Breast epithelium (tissue), 4 donors: ENCODE measurements at regions of chr9 and their contacts with region 1.

Region 1: GRCh38 chr9:89388084-89388867 is 70.0 kb downstream of the SECISBP2 start:
- DNase-seq: peak in 1 of 2 donors; percentile 62
- H3K4me3 ChIP-seq: no peak overlapping the region
- H3K27ac ChIP-seq: peak overlapping the region; percentile 65 to 84
- H3K4me1 ChIP-seq: peaks cover 0 to 4% of the 10 kb centered on the region in 2 donors
- H3K27me3 ChIP-seq: no peaks in the 10 kb centered on the region
- CTCF ChIP-seq: no peak
- POLR2A ChIP-seq: no peak

Region 2: GRCh38 chr9:89310475-89311346 is 77.6 kb before region 1 on chr9 and contains the start of gene CKS2:
- intact Hi-C with region 1: no loop called
- DNase-seq: peak; percentile 100
- H3K4me3 ChIP-seq: peak within 1 kb of the TSS; percentile 74 to 87 (median 85)
- H3K27ac ChIP-seq: peak within 1 kb of the TSS; percentile 99 to 100
- H3K4me1 ChIP-seq: peaks cover 0 to 8% of the 10 kb centered on the region in 2 donors
- H3K27me3 ChIP-seq: no peaks in the 10 kb centered on the region
- CTCF ChIP-seq: peak in 1 of 3 donors; percentile 12
- POLR2A ChIP-seq: peak; percentile 97
- total RNA-seq, gene CKS2: 18.2 to 32.4 (median 21.7) TPM

Region 3: DNA sequence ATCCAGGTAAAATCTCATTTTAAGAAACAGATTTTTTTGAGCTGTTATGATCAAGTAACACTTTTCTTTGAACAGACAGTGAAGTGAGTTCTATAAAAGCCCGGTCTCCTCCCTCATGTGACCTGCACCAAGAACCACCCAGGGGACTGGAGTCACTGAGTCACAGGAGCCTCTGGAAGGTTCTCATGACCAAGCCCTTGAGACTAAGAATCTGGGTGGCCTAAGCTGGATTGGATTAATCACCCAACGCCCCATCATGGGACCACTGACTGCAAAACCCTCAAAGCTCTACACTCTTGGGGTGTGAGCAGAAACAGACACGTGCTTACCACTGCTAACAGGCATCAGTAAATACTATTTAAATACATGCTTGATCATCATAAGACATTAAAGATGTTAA is 21.6 kb before region 1 on chr9:
- intact Hi-C with region 1: loop called (anchors 1 kb)
- DNase-seq: no peak
- H3K4me3 ChIP-seq: no peak overlapping the region
- H3K27ac ChIP-seq: no peak overlapping the region
- H3K4me1 ChIP-seq: no peaks in the 10 kb centered on the region
- H3K27me3 ChIP-seq: no peaks in the 10 kb centered on the region
- CTCF ChIP-seq: no peak
- POLR2A ChIP-seq: no peak